Activated CD4-positive, alpha-beta T cell treated with anti-CD3 and anti-CD28 coated beads for 36 hours (primary cell): ENCODE measurements at regions of chr12 and their contacts with region 1.

Region 1: DNA sequence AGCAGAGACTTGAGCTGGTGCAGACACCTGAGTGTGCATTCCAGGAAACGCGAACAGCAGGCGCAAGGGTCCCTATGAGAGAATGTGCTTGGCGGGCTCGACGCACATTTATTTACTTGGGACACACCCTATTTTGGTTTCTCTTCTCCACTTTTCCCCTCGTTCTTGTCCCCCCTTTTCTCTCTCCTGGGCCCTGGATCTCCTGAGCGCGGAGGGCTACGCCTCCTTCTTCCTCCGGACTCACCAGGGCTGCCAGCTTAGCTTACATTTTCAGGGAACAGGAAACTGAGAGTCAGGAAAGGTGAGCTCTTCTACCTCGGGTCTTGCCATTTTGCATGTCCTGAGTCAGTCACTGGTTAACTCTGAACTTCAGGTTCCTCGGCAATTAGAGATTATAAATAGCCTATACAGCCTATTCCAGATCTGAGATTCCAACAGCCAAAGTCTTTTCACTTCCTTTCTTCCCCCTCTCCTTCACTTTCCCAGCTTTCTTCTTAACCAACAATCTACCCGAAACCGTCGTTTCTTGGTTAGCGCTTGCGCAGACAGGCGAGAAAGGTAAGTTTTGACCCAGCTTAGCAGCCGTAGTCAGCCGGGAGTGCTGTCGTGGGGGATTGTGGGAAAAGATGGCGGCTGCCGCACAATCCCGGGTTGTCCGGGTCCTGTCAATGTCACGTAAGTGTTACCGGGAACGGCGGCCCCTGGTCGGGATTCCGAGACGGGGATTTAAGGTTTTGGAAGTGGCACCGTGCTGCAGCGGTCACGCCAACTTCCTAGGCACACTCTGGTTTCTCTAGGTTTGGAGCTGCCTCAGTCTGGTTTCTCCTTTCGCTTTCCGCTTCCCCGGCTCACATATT is at the starts of genes AKAP3 and NDUFA9:
- DNase-seq: peak; percentile 90
- ATAC-seq: peak; percentile 95
- H3K4me3 Mint-ChIP-seq: peak within 1 kb of the TSS; percentile 98
- H3K27ac Mint-ChIP-seq: peak within 1 kb of the TSS; percentile 91
- H3K4me1 Mint-ChIP-seq: peaks cover 48% of the 10 kb centered on the region
- H3K27me3 Mint-ChIP-seq: no peaks in the 10 kb centered on the region
- total RNA-seq, gene AKAP3: 1.3 to 2.8 TPM
- total RNA-seq, gene NDUFA9: 93.3 to 132 TPM

Region 2: DNA sequence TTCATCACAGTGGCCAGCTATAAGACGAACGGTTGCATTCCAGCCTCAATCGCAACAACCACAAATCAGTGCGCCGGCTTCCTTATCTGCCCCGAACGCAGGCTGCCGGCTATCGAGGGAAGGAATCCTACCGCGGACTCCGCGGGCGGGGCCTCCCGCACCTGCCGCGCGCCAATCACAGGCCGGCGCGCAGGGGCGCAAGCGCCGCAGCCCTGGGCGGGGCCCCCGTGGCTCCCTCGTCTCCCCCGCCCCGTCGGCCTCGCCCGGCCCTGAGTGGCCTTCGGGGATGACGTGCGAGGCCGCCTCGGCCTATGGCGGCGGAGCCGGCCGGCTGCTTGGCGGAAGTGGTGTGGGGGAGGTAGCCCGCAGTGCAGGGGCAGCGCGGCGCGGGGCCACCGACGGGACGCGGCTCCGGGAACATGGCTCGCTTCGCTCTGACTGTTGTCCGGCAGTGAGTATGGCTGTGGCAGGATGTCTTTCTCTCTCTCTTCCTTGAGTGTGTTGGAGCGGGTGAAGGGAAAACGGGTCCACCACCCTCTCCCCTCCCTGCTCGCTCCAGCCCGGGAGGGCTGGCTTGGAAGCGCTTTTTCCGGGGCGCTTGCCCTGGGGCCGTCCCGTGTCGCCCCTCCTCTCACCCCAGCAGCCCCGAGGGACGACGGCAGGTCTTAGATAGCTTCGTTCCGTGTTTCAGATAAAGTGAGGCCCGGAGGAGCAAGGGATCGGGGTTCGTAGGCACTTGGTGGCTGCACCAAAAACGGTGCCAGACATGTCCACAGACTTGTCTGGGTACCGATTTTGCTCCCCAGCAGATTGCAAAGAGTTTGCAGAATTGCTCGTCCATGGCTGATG is 327.7 kb before region 1 on chr12 and contains the start of gene TIGAR:
- CTCF ChIA-PET with region 1: no interaction called
- POLR2A ChIA-PET with region 1: no interaction called
- intact Hi-C with region 1: loop called in 1 of 2 experiments (anchors 1 kb)
- DNase-seq: peak; percentile 96
- ATAC-seq: peak; percentile 99
- H3K4me3 Mint-ChIP-seq: peak within 1 kb of the TSS; percentile 89
- H3K27ac Mint-ChIP-seq: peak within 1 kb of the TSS; percentile 85
- H3K4me1 Mint-ChIP-seq: peaks cover 33% of the 10 kb centered on the region
- H3K27me3 Mint-ChIP-seq: no peaks in the 10 kb centered on the region
- total RNA-seq, gene TIGAR: 7.1 to 8.4 TPM

Region 3: GRCh38 chr12:4356041-4356327 is 292.7 kb before region 1 on chr12:
- CTCF ChIA-PET with region 1: no interaction called
- POLR2A ChIA-PET with region 1: no interaction called
- intact Hi-C with region 1: loop called in 1 of 2 experiments (anchors 10 kb)
- DNase-seq: peak; percentile 85
- ATAC-seq: peak; percentile 73
- H3K4me3 Mint-ChIP-seq: no peak overlapping the region
- H3K27ac Mint-ChIP-seq: no peak overlapping the region
- H3K4me1 Mint-ChIP-seq: no peaks in the 10 kb centered on the region
- H3K27me3 Mint-ChIP-seq: no peaks in the 10 kb centered on the region

Region 4: GRCh38 chr12:4604684-4605193 is 44.0 kb before region 1 on chr12:
- CTCF ChIA-PET with region 1: interaction called, 19 read pairs
- POLR2A ChIA-PET with region 1: interaction called, 9 read pairs
- intact Hi-C with region 1: loop called (anchors 1 to 2 kb)
- DNase-seq: peak; percentile 90
- ATAC-seq: peak; percentile 98
- H3K4me3 Mint-ChIP-seq: peak overlapping the region; percentile 95
- H3K27ac Mint-ChIP-seq: peak overlapping the region; percentile 96
- H3K4me1 Mint-ChIP-seq: peaks cover 18% of the 10 kb centered on the region
- H3K27me3 Mint-ChIP-seq: no peaks in the 10 kb centered on the region

Region 5: GRCh38 chr12:4663971-4664505 is 15.3 kb after region 1 on chr12:
- CTCF ChIA-PET with region 1: no interaction called
- POLR2A ChIA-PET with region 1: no interaction called
- intact Hi-C with region 1: no loop called
- DNase-seq: no peak
- ATAC-seq: no peak
- H3K4me3 Mint-ChIP-seq: no peak overlapping the region
- H3K27ac Mint-ChIP-seq: peak overlapping the region; percentile 28
- H3K4me1 Mint-ChIP-seq: peaks cover 4% of the 10 kb centered on the region
- H3K27me3 Mint-ChIP-seq: no peaks in the 10 kb centered on the region

Region 6: DNA sequence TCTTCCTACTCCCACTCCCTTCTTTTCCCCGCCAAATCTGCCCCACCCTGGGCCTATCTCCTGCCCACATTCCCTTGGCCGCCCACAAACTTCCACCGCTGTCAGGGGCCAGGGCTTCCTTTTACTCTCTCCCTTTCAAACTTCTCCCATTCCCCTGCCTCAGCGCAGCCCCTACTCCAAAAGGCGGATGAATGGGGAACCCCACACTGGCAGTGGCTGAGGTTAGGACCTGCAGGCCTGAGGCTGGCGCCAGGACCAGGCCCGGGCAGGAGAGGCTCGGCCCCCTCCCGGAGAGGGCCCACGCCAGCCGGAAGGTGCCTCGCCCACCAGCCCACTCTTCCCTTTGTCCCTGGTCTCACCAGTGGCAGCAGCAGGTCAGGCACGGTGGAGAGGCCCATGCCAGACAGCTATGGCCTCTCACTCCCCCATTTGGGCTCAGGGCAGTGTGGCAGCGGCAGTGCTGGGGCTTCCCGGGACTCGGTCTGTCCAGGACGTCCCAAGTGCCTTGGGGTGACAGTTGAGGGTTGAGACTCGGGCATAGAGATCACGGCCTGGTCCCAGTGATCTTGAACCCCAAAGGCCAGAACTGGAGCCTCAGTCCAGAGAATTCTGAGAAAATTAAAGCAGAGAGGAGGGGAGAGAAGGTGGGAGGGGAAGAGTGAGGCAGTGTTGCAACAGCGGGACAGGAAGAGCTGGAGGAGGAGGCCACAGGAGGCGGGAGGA is 1692.8 kb after region 1 on chr12 and contains the start of gene TNFRSF1A:
- CTCF ChIA-PET with region 1: no interaction called
- POLR2A ChIA-PET with region 1: no interaction called
- intact Hi-C with region 1: loop called in 1 of 2 experiments (anchors 5 kb)
- DNase-seq: peak; percentile 74
- ATAC-seq: peak; percentile 45
- H3K4me3 Mint-ChIP-seq: no peak within 1 kb of the TSS
- H3K27ac Mint-ChIP-seq: no peak within 1 kb of the TSS
- H3K4me1 Mint-ChIP-seq: peaks cover 37% of the 10 kb centered on the region
- H3K27me3 Mint-ChIP-seq: no peaks in the 10 kb centered on the region
- total RNA-seq, gene TNFRSF1A: 42.1 to 58.7 TPM